B cell (primary cell): ENCODE measurements at regions of chr12 and their contacts with region 1.

Region 1: DNA sequence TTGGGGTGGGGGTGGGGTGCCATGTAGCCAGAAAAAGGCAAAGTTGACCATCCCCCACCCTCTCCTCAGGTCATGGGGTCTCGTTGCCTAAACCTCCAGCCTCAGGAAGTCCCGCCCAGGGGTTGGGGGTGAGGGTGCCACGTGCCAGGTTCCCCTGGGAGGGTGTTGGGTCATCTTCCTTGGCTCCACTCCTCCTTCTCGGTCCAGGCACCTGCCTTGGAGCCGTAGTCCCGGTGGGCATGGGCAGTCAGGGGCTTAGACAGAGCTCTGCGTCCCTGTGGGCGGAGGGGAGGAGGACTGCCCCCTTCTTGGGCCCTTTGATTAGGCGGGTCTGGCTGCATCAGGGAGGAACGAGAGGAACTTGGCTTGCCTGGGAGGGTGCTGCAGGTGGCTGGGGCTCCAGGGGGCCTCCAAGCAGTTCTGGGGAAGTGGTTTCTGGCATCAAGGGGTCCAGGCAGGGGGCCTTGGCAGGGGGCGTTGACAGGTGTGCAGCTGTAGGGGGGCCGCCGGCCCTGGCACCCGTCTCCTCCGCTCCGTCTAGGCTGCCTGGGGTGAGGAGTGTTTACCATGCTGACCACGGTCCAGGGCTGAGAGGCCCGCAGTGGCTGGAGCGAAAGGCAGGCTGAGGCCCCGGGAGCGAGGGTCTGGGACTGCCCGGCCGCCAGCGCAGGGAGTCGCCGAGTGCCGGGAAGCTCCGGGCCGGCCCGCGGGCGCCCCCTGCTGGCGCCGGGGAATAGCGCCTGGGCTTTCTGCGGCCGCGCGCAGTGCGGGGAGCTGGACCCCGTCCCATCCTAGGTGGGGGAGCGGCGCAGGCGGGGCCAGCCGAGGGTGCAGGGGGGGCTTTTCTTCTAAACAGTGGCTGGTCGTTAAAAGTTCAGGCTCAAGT is 7.9 kb downstream of the SETD1B start:
- DNase-seq: peak; percentile 81
- ATAC-seq: peak; percentile 78
- H3K4me3 ChIP-seq: peak overlapping the region; percentile 11 to 53 (median 47)
- H3K4me3 Mint-ChIP-seq: peak overlapping the region; percentile 84
- H3K27ac ChIP-seq: peak overlapping the region; percentile 11 to 61
- H3K27ac Mint-ChIP-seq: peak overlapping the region; percentile 87
- H3K4me1 ChIP-seq: peaks cover 42 to 51% of the 10 kb centered on the region in 2 donors
- H3K4me1 Mint-ChIP-seq: peaks cover 48% of the 10 kb centered on the region
- H3K27me3 ChIP-seq: no peaks in the 10 kb centered on the region
- H3K27me3 Mint-ChIP-seq: no peaks in the 10 kb centered on the region
- CTCF ChIP-seq: peak; percentile 100

Region 2: GRCh38 chr12:121560392-121561008 is 251.2 kb before region 1 on chr12:
- CTCF ChIA-PET with region 1: no interaction called
- POLR2A ChIA-PET with region 1: no interaction called
- intact Hi-C with region 1: no loop called
- DNase-seq: peak; percentile 90
- ATAC-seq: peak; percentile 78
- H3K4me3 ChIP-seq: no peak overlapping the region
- H3K4me3 Mint-ChIP-seq: peak overlapping the region; percentile 53
- H3K27ac ChIP-seq: peak overlapping the region; percentile 58
- H3K27ac Mint-ChIP-seq: peak overlapping the region; percentile 91
- H3K4me1 ChIP-seq: peaks cover 29 to 48% of the 10 kb centered on the region in 2 donors
- H3K4me1 Mint-ChIP-seq: peaks cover 40% of the 10 kb centered on the region
- H3K27me3 ChIP-seq: no peaks in the 10 kb centered on the region
- H3K27me3 Mint-ChIP-seq: no peaks in the 10 kb centered on the region
- CTCF ChIP-seq: no peak

Region 3: GRCh38 chr12:121697098-121697698 is 114.5 kb before region 1 on chr12:
- CTCF ChIA-PET with region 1: interaction called, 18 read pairs
- POLR2A ChIA-PET with region 1: no interaction called
- intact Hi-C with region 1: no loop called
- DNase-seq: peak; percentile 74
- ATAC-seq: peak; percentile 47
- H3K4me3 ChIP-seq: no peak overlapping the region
- H3K4me3 Mint-ChIP-seq: no peak overlapping the region
- H3K27ac ChIP-seq: no peak overlapping the region
- H3K27ac Mint-ChIP-seq: no peak overlapping the region
- H3K4me1 ChIP-seq: peaks cover 0 to 4% of the 10 kb centered on the region in 2 donors
- H3K4me1 Mint-ChIP-seq: peaks cover 2% of the 10 kb centered on the region
- H3K27me3 ChIP-seq: no peaks in the 10 kb centered on the region
- H3K27me3 Mint-ChIP-seq: no peaks in the 10 kb centered on the region
- CTCF ChIP-seq: peak; percentile 77

Region 4: GRCh38 chr12:121773011-121773777 is 38.5 kb before region 1 on chr12:
- CTCF ChIA-PET with region 1: interaction called, 1,947 read pairs
- POLR2A ChIA-PET with region 1: interaction called, 4 read pairs
- intact Hi-C with region 1: loop called (anchors 5 kb)
- DNase-seq: peak; percentile 87
- ATAC-seq: peak; percentile 96
- H3K4me3 ChIP-seq: no peak overlapping the region
- H3K4me3 Mint-ChIP-seq: no peak overlapping the region
- H3K27ac ChIP-seq: no peak overlapping the region
- H3K27ac Mint-ChIP-seq: peak overlapping the region; percentile 82
- H3K4me1 ChIP-seq: peaks cover 15 to 25% of the 10 kb centered on the region in 2 donors
- H3K4me1 Mint-ChIP-seq: peaks cover 16% of the 10 kb centered on the region
- H3K27me3 ChIP-seq: no peaks in the 10 kb centered on the region
- H3K27me3 Mint-ChIP-seq: no peaks in the 10 kb centered on the region
- CTCF ChIP-seq: peak; percentile 87

Region 5: GRCh38 chr12:121823101-121823726 is 11.5 kb after region 1 on chr12:
- CTCF ChIA-PET with region 1: interaction called, 16 read pairs
- POLR2A ChIA-PET with region 1: interaction called, 5 read pairs
- intact Hi-C with region 1: no loop called
- DNase-seq: no peak
- ATAC-seq: no peak
- H3K4me3 ChIP-seq: no peak overlapping the region
- H3K4me3 Mint-ChIP-seq: no peak overlapping the region
- H3K27ac ChIP-seq: no peak overlapping the region
- H3K27ac Mint-ChIP-seq: no peak overlapping the region
- H3K4me1 ChIP-seq: no peaks in the 10 kb centered on the region
- H3K4me1 Mint-ChIP-seq: no peaks in the 10 kb centered on the region
- H3K27me3 ChIP-seq: no peaks in the 10 kb centered on the region
- H3K27me3 Mint-ChIP-seq: no peaks in the 10 kb centered on the region
- CTCF ChIP-seq: no peak

Region 6: DNA sequence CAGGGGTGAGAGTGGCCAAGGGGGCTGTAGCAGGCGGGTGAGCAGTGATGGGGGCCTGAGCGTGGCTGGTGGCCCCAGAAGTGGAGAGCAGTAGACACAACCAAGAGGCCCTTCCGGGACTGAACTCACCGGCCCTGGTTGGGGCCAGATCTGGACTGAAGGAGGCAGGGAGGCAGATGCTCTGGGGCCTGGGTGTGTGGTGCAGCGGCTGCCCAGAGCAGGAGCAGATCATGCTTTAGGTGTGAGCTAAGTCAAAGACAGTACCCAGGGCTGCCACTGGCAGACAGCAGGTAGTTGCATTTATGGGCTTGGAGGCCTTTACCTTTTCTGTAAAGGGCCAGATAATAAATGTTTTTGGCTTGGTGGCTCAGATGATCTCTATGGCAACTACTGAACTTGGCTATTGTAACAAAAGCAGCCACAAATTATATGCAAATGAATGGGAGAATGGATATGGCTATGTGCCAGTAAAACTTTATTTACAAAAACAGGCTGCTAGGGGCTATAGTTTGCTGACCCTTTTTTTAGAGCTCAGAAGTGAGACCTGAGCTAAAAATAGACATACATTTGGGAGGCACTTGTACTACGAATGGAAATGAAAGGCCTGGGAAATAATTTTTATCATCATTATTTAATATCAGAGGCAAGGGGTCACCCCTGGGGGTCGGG is 17.7 kb after region 1 on chr12:
- CTCF ChIA-PET with region 1: interaction called, 16 read pairs
- POLR2A ChIA-PET with region 1: no interaction called
- intact Hi-C with region 1: no loop called
- DNase-seq: no peak
- ATAC-seq: no peak
- H3K4me3 ChIP-seq: no peak overlapping the region
- H3K4me3 Mint-ChIP-seq: no peak overlapping the region
- H3K27ac ChIP-seq: no peak overlapping the region
- H3K27ac Mint-ChIP-seq: peak overlapping the region; percentile 41
- H3K4me1 ChIP-seq: no peaks in the 10 kb centered on the region
- H3K4me1 Mint-ChIP-seq: no peaks in the 10 kb centered on the region
- H3K27me3 ChIP-seq: no peaks in the 10 kb centered on the region
- H3K27me3 Mint-ChIP-seq: no peaks in the 10 kb centered on the region
- CTCF ChIP-seq: no peak

Region 7: DNA sequence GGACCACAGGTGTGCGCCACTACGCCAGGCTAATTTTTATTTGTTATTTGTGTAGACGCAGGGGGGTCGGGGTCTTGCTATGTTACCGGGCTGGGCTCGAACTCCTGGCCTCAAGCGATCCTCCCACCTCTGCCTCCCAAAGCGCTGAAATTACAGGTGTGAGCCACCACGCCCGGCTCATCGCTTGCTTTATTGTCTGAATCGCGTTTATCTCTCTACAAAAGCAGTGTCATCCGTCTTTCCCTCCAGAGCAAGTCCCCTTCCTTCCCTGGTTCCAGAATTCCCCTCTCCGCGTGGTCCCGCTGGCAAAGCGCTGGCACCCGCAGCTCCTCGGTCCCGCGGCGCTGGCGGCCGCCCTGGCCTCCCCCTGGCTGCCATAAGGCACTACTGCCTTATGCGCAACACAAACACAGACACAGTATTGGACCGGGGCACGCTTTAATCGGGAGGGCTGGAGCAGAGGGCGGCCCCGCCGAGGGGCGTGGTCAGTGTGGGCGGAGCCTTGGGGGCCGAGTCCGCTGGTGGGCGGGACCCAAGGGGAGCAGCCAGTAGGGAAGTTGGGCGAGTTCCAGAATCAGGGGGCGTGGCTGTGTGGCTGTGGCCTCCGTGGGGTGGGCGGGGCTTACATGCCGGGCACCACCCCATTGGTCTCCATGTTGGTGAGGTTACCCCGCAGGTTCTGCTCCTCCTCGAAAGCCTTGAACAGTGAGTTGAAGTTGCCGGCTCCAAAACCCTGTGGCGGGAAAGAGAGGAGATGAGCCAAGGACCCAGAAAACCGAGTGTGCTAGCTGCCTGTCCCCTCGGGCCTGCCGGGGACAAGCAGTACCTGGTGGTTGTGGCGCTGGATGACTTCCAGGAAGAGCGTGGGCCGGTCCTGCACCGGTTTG is 27.7 kb after region 1 on chr12:
- CTCF ChIA-PET with region 1: interaction called, 19 read pairs
- POLR2A ChIA-PET with region 1: no interaction called
- intact Hi-C with region 1: no loop called
- DNase-seq: peak; percentile 99
- ATAC-seq: peak; percentile 99
- H3K4me3 ChIP-seq: peak overlapping the region; percentile 65 to 90 (median 78)
- H3K4me3 Mint-ChIP-seq: peak overlapping the region; percentile 99
- H3K27ac ChIP-seq: peak overlapping the region in 1 of 2 donors; percentile 56
- H3K27ac Mint-ChIP-seq: peak overlapping the region; percentile 91
- H3K4me1 ChIP-seq: peaks cover 7 to 16% of the 10 kb centered on the region in 2 donors
- H3K4me1 Mint-ChIP-seq: peaks cover 18% of the 10 kb centered on the region
- H3K27me3 ChIP-seq: no peaks in the 10 kb centered on the region
- H3K27me3 Mint-ChIP-seq: no peaks in the 10 kb centered on the region
- CTCF ChIP-seq: peak; percentile 13

Region 8: GRCh38 chr12:121888478-121889266 is 77.0 kb after region 1 on chr12 and contains the start of gene PSMD9:
- CTCF ChIA-PET with region 1: interaction called, 13 read pairs
- POLR2A ChIA-PET with region 1: interaction called, 6 read pairs
- intact Hi-C with region 1: no loop called
- DNase-seq: peak; percentile 98
- ATAC-seq: peak; percentile 96
- H3K4me3 ChIP-seq: peak within 1 kb of the TSS; percentile 70 to 92 (median 78)
- H3K4me3 Mint-ChIP-seq: peak within 1 kb of the TSS; percentile 99
- H3K27ac ChIP-seq: peak within 1 kb of the TSS; percentile 86 to 95
- H3K27ac Mint-ChIP-seq: peak within 1 kb of the TSS; percentile 99
- H3K4me1 ChIP-seq: peaks cover 15 to 19% of the 10 kb centered on the region in 2 donors
- H3K4me1 Mint-ChIP-seq: peaks cover 32% of the 10 kb centered on the region
- H3K27me3 ChIP-seq: peaks cover 0 to 5% (median 0%) of the 10 kb centered on the region in 4 experiments
- H3K27me3 Mint-ChIP-seq: no peaks in the 10 kb centered on the region
- CTCF ChIP-seq: peak; percentile 68
- total RNA-seq, gene PSMD9: 37.1 and 38.2 TPM in 2 replicates

Region 9: DNA sequence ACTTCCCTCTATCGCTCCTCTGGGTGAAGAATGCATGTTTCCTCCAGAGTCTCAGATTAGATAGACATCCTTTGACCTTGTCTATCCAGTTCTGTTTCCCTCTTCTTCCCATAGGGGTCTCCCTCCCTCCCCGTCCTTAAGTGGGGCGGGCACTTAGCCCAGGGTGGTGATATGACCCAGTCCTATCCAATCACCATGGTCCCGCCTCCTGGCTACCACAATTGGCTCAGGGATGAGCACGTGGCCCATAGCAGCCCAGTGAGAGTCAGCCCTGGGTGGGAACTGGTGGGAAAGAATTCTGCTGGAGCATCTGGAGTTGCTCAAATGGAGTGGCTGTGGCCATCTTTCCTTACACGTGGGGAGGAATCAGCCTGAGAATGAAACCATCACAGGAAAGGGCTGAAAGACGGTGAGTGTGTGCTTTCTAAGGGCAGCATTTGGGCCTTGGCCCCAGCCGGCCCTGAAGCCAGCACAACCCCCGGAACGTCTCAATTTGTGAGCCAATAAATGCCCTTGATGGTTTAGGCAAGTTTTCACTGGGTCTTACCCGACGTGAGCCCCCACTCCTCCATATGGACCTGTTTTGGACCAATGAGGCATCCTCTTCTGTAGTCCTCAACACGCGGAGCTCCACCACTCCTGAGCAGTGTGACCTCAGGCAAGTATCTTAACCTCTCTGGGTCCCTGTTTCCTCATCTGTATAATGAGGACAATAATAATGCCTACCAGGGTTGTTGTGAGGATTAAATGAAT is 252.5 kb after region 1 on chr12:
- CTCF ChIA-PET with region 1: no interaction called
- POLR2A ChIA-PET with region 1: no interaction called
- intact Hi-C with region 1: no loop called
- DNase-seq: peak; percentile 58
- ATAC-seq: peak; percentile 66
- H3K4me3 ChIP-seq: no peak overlapping the region
- H3K4me3 Mint-ChIP-seq: no peak overlapping the region
- H3K27ac ChIP-seq: no peak overlapping the region
- H3K27ac Mint-ChIP-seq: peak overlapping the region; percentile 65
- H3K4me1 ChIP-seq: peaks cover 30 to 49% of the 10 kb centered on the region in 2 donors
- H3K4me1 Mint-ChIP-seq: peaks cover 47% of the 10 kb centered on the region
- H3K27me3 ChIP-seq: no peaks in the 10 kb centered on the region
- H3K27me3 Mint-ChIP-seq: no peaks in the 10 kb centered on the region
- CTCF ChIP-seq: no peak